HepG2 (cell line): ENCODE measurements at regions of chr15 and their contacts with region 1.

Region 1: GRCh38 chr15:45333550-45333949 is 44.8 kb downstream of the GATM start:
- DNase-seq: peak; percentile 53
- ATAC-seq: peak; percentile 49; the same call in 2 of the 3 replicates
- H3K4me3 ChIP-seq: no peak overlapping the region
- H3K27ac ChIP-seq: peak overlapping the region; percentile 88
- H3K4me1 ChIP-seq: peaks cover 90% of the 10 kb centered on the region
- H3K27me3 ChIP-seq: no peaks in the 10 kb centered on the region
- CTCF ChIP-seq: no peak
- EP300 ChIP-seq: no peak
- POLR2A ChIP-seq: no peak
- RAD21 ChIP-seq: no peak

Region 2: GRCh38 chr15:45064386-45064785 is 269.2 kb before region 1 on chr15:
- CTCF ChIA-PET with region 1: no interaction called
- POLR2A ChIA-PET with region 1: no interaction called
- in situ Hi-C with region 1: no loop called
- intact Hi-C with region 1: no loop called
- DNase-seq: peak; percentile 84
- ATAC-seq: peak; percentile 42; the same call in 1 of the 3 replicates
- H3K4me3 ChIP-seq: no peak overlapping the region
- H3K27ac ChIP-seq: no peak overlapping the region
- H3K4me1 ChIP-seq: no peaks in the 10 kb centered on the region
- H3K27me3 ChIP-seq: no peaks in the 10 kb centered on the region
- CTCF ChIP-seq: no peak
- EP300 ChIP-seq: no peak
- POLR2A ChIP-seq: no peak
- RAD21 ChIP-seq: no peak

Region 3: DNA sequence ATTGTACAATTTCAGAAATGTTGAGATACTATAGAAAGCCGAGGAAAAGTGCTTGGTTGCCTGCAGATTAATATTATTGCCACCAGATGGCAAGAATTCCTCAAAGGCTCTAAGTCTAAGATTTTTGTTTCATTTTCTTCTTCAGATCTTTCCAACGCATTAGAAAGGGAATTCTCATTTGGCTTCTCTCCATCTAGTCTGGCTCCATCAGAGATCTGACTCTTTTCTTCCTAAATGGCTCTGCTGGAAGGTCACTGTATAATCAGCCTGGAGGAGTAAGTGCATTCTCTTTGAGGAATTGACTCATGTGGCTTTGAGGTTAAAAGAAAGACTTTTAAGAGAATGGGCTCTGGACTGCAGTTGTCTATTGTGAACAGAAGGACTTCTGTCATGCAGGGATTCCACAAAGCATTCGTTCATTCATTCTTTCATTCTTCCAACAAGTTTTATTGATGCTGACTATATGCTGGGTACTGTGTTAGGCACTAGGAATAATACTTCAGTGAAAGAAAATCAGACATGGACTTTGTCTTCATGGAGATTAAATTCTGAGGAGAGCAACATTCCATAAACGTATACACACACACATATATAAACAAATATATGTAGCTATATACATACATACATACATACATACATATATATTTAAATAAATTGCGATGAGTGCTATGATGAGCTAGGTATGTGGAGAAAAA is 26.2 kb before region 1 on chr15:
- CTCF ChIA-PET with region 1: no interaction called
- POLR2A ChIA-PET with region 1: interaction called, 4 read pairs
- in situ Hi-C with region 1: no loop called
- intact Hi-C with region 1: loop called (anchors 2 kb)
- DNase-seq: peak; percentile 53
- ATAC-seq: peak; percentile 51
- H3K4me3 ChIP-seq: peak overlapping the region; percentile 25 to 36 (median 26); a peak in 4 of 6 replicates
- H3K27ac ChIP-seq: peak overlapping the region; percentile 53
- H3K4me1 ChIP-seq: peaks cover 61% of the 10 kb centered on the region
- H3K27me3 ChIP-seq: no peaks in the 10 kb centered on the region
- CTCF ChIP-seq: peak; percentile 66
- EP300 ChIP-seq: no peak
- POLR2A ChIP-seq: no peak
- RAD21 ChIP-seq: peak; percentile 65

Region 4: GRCh38 chr15:45386420-45386819 is 52.9 kb after region 1 on chr15:
- CTCF ChIA-PET with region 1: no interaction called
- POLR2A ChIA-PET with region 1: no interaction called
- in situ Hi-C with region 1: no loop called
- intact Hi-C with region 1: loop called (anchors 2 kb)
- DNase-seq: peak; percentile 47
- ATAC-seq: peak; percentile 65
- H3K4me3 ChIP-seq: no peak overlapping the region
- H3K27ac ChIP-seq: peak overlapping the region; percentile 69
- H3K4me1 ChIP-seq: peaks cover 76% of the 10 kb centered on the region
- H3K27me3 ChIP-seq: no peaks in the 10 kb centered on the region; a peak in 1 of 5 replicates
- CTCF ChIP-seq: no peak
- EP300 ChIP-seq: no peak; a peak in 1 of 4 replicates
- POLR2A ChIP-seq: no peak
- RAD21 ChIP-seq: no peak

Region 5: GRCh38 chr15:45414215-45414885 is 80.8 kb after region 1 on chr15:
- CTCF ChIA-PET with region 1: no interaction called
- POLR2A ChIA-PET with region 1: no interaction called
- in situ Hi-C with region 1: no loop called
- intact Hi-C with region 1: no loop called
- DNase-seq: no peak
- ATAC-seq: no peak
- H3K4me3 ChIP-seq: no peak overlapping the region
- H3K27ac ChIP-seq: no peak overlapping the region
- H3K4me1 ChIP-seq: peaks cover 19% of the 10 kb centered on the region
- H3K27me3 ChIP-seq: no peaks in the 10 kb centered on the region; a peak in 1 of 5 replicates
- CTCF ChIP-seq: no peak
- EP300 ChIP-seq: no peak
- POLR2A ChIP-seq: no peak
- RAD21 ChIP-seq: no peak